Heart left ventricle (tissue), 16 donors: ENCODE measurements at regions of chr2 and their contacts with region 1.

Region 1: GRCh38 chr2:133774654-133775015 is 206.4 kb upstream of the NCKAP5 start:
- DNase-seq: peak in 3 of 5 donors; percentile 28 to 38 (median 34)
- ATAC-seq: peak in 3 of 4 donors; percentile 30 to 53 (median 49)
- H3K4me3 ChIP-seq: no peak overlapping the region
- H3K27ac ChIP-seq: peak overlapping the region in 11 of 12 donors; percentile 33 to 80 (median 73)
- H3K4me1 ChIP-seq: peaks cover 0 to 36% (median 15%) of the 10 kb centered on the region in 12 donors
- H3K27me3 ChIP-seq: no peaks in the 10 kb centered on the region
- CTCF ChIP-seq: no peak
- POLR2A ChIP-seq: no peak

Region 2: GRCh38 chr2:133568172-133568571 is 206.5 kb before region 1 on chr2 and contains the start of gene NCKAP5:
- intact Hi-C with region 1: loop called in 7 of 10 experiments (anchors 2 to 10 kb)
- DNase-seq: peak in 2 of 5 donors; percentile 10 to 36
- ATAC-seq: peak; percentile 28 to 38 (median 30)
- H3K4me3 ChIP-seq: peak within 1 kb of the TSS in 11 of 12 donors; percentile 1 to 58 (median 44)
- H3K27ac ChIP-seq: peak within 1 kb of the TSS in 11 of 12 donors; percentile 36 to 73 (median 58)
- H3K4me1 ChIP-seq: peaks cover 0 to 25% (median 7%) of the 10 kb centered on the region in 12 donors
- H3K27me3 ChIP-seq: no peaks in the 10 kb centered on the region
- CTCF ChIP-seq: peak in 4 of 12 donors; percentile 11 to 24 (median 14)
- POLR2A ChIP-seq: no peak
- total RNA-seq, gene NCKAP5: 1.8 to 10.5 (median 6.3) TPM